Naive thymus-derived CD4-positive, alpha-beta T cell (primary cell): ENCODE measurements at regions of chr2 and their contacts with region 1.

Region 1: GRCh38 chr2:55050133-55050994 is at the start of gene RTN4:
- DNase-seq: peak; percentile 89 to 99 (median 97)
- ATAC-seq: peak; percentile 94
- H3K4me3 ChIP-seq: peak within 1 kb of the TSS; percentile 93
- H3K4me3 Mint-ChIP-seq: peak within 1 kb of the TSS; percentile 97 to 100 (median 100)
- H3K27ac ChIP-seq: peak within 1 kb of the TSS; percentile 81
- H3K27ac Mint-ChIP-seq: peak within 1 kb of the TSS; percentile 97 to 100 (median 100)
- H3K4me1 ChIP-seq: peaks cover 31 to 38% of the 10 kb centered on the region in 2 donors
- H3K4me1 Mint-ChIP-seq: peaks cover 40 to 82% (median 68%) of the 10 kb centered on the region in 7 donors
- H3K27me3 ChIP-seq: no peaks in the 10 kb centered on the region
- H3K27me3 Mint-ChIP-seq: no peaks in the 10 kb centered on the region
- total RNA-seq, gene RTN4: 59.6 to 100 (median 65.1) TPM

Region 2: DNA sequence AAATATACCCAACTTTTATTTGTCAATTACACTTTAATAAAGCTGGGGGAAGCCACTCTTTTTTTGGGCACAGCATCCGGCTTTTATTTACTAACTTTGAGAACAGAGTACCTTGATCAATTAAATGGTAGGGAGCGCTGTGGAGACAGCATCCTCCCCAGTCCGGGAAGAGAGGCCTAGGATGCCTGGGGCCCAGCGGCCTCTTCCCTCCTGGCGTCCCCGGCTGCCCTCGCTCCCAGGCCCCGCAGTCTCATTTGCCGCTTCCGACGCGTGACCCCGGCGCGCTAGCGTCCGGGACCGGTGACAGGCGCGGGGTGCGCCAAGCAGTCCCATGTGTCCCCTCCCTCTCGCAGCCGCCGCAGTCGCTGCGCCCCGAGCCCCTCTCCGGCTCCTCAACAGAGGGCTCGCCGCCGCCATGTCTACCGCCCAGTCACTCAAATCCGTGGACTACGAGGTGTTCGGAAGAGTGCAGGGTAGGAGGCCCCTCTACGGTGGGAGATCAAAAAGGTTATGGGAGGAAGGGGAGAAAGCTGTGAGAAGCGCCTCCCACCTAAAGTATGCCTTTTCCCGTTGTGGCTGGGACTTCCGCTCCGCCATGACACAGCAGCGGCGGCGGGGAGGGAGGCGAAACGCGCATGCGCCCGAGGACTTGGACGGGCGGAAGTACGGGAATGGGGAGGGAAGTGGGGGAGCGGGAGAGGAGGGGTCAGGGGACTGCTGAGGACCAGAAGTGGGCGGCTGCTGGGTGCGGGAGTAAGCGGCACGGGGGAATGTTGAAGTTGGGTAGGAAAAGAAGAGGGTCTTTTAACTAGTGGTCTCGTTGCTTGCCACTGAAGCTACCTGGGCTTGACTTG is 934.9 kb before region 1 on chr2 and contains the start of gene ACYP2:
- CTCF ChIA-PET with region 1: no interaction called
- POLR2A ChIA-PET with region 1: no interaction called
- intact Hi-C with region 1: loop called (anchors 1 kb)
- DNase-seq: peak; percentile 76 to 93 (median 89)
- ATAC-seq: peak; percentile 88
- H3K4me3 ChIP-seq: peak within 1 kb of the TSS; percentile 89
- H3K4me3 Mint-ChIP-seq: peak within 1 kb of the TSS; percentile 92 to 98 (median 97)
- H3K27ac ChIP-seq: peak within 1 kb of the TSS; percentile 93
- H3K27ac Mint-ChIP-seq: peak within 1 kb of the TSS; percentile 98 to 100 (median 99)
- H3K4me1 ChIP-seq: peaks cover 0 to 6% of the 10 kb centered on the region in 2 donors
- H3K4me1 Mint-ChIP-seq: peaks cover 10 to 31% (median 24%) of the 10 kb centered on the region in 7 donors
- H3K27me3 ChIP-seq: no peaks in the 10 kb centered on the region
- H3K27me3 Mint-ChIP-seq: peaks cover 0 to 5% (median 0%) of the 10 kb centered on the region in 5 donors
- total RNA-seq, gene ACYP2: 12.3 to 19.6 (median 15.6) TPM

Region 3: DNA sequence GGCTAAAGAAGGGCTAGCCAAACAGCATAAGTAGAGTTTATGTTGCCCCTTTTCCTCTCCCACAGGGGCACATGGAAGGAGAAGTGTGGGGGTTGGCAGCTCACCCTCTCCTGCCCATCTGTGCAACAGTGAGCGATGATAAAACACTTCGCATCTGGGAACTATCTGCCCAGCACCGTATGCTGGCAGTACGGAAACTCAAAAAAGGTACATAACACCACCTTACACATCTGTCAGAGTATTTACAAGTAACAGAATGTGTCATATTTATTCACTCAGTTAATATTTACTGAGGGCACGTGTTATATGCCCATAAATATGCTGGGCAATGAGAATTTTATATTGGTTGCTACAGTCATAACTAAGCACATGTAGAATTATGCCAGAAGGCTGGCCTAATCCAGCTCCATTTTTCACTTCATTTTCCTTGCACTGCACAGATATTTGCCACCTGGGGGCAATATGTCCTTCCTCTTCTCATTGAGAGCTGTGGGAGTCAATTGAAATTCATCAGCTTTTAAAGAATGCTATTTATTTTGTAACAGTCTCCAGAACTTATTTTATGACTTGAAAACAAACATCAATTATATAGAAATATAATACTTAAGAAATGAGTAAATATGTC is 150.7 kb before region 1 on chr2:
- CTCF ChIA-PET with region 1: no interaction called
- POLR2A ChIA-PET with region 1: no interaction called
- intact Hi-C with region 1: loop called in 1 of 2 experiments (anchors 5 kb)
- DNase-seq: peak in 5 of 9 donors; percentile 6 to 40 (median 16)
- ATAC-seq: peak; percentile 31
- H3K4me3 ChIP-seq: no peak overlapping the region
- H3K4me3 Mint-ChIP-seq: no peak overlapping the region
- H3K27ac ChIP-seq: no peak overlapping the region
- H3K27ac Mint-ChIP-seq: peak overlapping the region in 4 of 9 donors; percentile 9 to 89 (median 72)
- H3K4me1 ChIP-seq: peaks cover 10 to 19% of the 10 kb centered on the region in 2 donors
- H3K4me1 Mint-ChIP-seq: peaks cover 13 to 32% (median 29%) of the 10 kb centered on the region in 7 donors
- H3K27me3 ChIP-seq: no peaks in the 10 kb centered on the region
- H3K27me3 Mint-ChIP-seq: no peaks in the 10 kb centered on the region

Region 4: DNA sequence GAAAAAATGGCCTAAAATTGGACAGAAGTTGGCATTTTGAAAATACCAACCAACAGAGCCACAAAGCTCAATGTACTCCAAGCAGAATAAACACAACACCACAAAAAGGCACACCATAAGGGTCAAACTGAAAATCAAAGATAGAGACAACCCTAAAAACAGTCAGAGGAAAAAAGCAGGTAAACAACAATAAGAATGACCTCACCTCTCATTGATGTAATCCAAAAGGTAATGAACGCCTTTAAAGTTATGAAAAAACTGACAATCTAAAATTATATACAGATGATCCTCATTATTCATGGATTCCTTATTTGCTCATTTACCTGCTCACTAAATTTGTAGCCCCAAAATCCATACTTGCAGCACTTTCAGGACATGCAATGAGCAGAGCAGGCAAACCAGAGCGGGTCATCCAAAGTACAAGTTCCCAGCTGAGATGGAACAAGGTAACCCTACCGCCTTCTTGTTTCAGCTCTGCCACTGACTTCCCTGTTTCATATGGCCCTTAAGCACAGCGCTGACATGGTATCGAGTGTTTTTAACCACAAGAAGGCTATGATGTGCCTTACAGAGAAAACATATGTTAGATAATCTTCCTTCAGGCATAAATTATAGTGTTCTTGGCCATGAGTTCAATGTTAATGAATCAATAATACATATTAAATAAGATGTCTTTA is 17.2 kb before region 1 on chr2:
- CTCF ChIA-PET with region 1: interaction called, 7 read pairs
- POLR2A ChIA-PET with region 1: interaction called, 7 read pairs
- intact Hi-C with region 1: loop called in 1 of 2 experiments (anchors 1 kb)
- DNase-seq: peak in 6 of 9 donors; percentile 20 to 53 (median 45)
- ATAC-seq: peak; percentile 87
- H3K4me3 ChIP-seq: no peak overlapping the region
- H3K4me3 Mint-ChIP-seq: peak overlapping the region in 7 of 10 donors; percentile 37 to 68 (median 58)
- H3K27ac ChIP-seq: no peak overlapping the region
- H3K27ac Mint-ChIP-seq: peak overlapping the region in 6 of 9 donors; percentile 9 to 78 (median 53)
- H3K4me1 ChIP-seq: peaks cover 5 to 21% of the 10 kb centered on the region in 2 donors
- H3K4me1 Mint-ChIP-seq: peaks cover 38 to 74% (median 65%) of the 10 kb centered on the region in 7 donors
- H3K27me3 ChIP-seq: no peaks in the 10 kb centered on the region
- H3K27me3 Mint-ChIP-seq: no peaks in the 10 kb centered on the region

Region 5: GRCh38 chr2:55223958-55224760 is 173.8 kb after region 1 on chr2:
- CTCF ChIA-PET with region 1: no interaction called
- POLR2A ChIA-PET with region 1: interaction called, 5 read pairs
- intact Hi-C with region 1: loop called (anchors 1 to 2 kb)
- DNase-seq: peak in 1 of 9 donors; percentile 13
- ATAC-seq: no peak
- H3K4me3 ChIP-seq: no peak overlapping the region
- H3K4me3 Mint-ChIP-seq: peak overlapping the region; percentile 71 to 89 (median 82)
- H3K27ac ChIP-seq: peak overlapping the region; percentile 92
- H3K27ac Mint-ChIP-seq: peak overlapping the region; percentile 72 to 94 (median 89)
- H3K4me1 ChIP-seq: peaks cover 14 to 18% of the 10 kb centered on the region in 2 donors
- H3K4me1 Mint-ChIP-seq: peaks cover 30 to 62% (median 48%) of the 10 kb centered on the region in 7 donors
- H3K27me3 ChIP-seq: no peaks in the 10 kb centered on the region
- H3K27me3 Mint-ChIP-seq: no peaks in the 10 kb centered on the region

Region 6: DNA sequence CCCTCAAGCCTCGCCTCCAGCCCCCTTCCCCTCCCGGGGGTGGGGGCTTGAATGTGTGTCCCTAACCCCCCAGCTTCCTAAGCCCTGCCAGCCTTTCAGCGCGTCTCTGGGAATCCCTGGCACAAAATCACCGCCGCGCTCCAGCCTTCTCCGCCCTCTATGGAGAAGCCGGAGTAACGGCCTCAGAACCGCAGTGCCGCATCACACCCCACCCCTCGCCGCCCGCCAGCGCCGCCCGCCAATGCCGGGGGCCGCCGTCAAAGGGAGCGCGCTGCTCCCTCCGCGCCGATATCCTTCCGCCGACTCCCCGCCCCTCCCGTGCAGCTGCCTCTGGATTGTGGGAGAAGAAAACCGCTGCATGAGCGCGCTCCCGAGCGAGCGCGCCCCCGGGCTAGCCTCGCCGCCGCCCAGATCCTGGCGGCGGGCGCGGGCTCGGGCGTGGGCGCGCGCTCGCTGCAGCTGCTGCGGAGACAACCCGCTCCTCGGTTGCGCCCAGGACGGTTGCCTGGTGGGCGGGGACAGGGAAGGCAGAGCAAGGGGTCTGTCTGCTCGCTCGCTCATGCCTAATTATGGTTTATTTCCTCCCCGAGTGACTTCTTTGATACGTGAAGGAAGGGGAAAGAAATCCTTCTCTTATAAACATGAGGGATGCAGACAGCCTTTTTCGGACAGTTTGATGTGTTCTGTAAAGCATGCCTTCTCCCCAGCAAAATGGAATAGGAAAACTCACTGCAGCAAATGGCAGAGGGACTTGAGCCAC is 369.5 kb after region 1 on chr2 and contains the start of gene CCDC88A:
- CTCF ChIA-PET with region 1: no interaction called
- POLR2A ChIA-PET with region 1: no interaction called
- intact Hi-C with region 1: loop called (anchors 1 to 5 kb)
- DNase-seq: peak; percentile 78 to 91 (median 85)
- ATAC-seq: peak; percentile 92
- H3K4me3 ChIP-seq: peak within 1 kb of the TSS; percentile 91
- H3K4me3 Mint-ChIP-seq: peak within 1 kb of the TSS; percentile 86 to 98 (median 94)
- H3K27ac ChIP-seq: peak within 1 kb of the TSS; percentile 69
- H3K27ac Mint-ChIP-seq: peak within 1 kb of the TSS; percentile 50 to 97 (median 85)
- H3K4me1 ChIP-seq: peaks cover 0 to 6% of the 10 kb centered on the region in 2 donors
- H3K4me1 Mint-ChIP-seq: peaks cover 5 to 49% (median 41%) of the 10 kb centered on the region in 7 donors
- H3K27me3 ChIP-seq: no peaks in the 10 kb centered on the region
- H3K27me3 Mint-ChIP-seq: peaks cover 0 to 40% (median 0%) of the 10 kb centered on the region in 5 donors
- total RNA-seq, gene CCDC88A: 9.9 to 53.3 (median 15.9) TPM